Heart left ventricle (tissue), 16 donors: ENCODE measurements at regions of chr13 and their contacts with region 1.

Region 1: DNA sequence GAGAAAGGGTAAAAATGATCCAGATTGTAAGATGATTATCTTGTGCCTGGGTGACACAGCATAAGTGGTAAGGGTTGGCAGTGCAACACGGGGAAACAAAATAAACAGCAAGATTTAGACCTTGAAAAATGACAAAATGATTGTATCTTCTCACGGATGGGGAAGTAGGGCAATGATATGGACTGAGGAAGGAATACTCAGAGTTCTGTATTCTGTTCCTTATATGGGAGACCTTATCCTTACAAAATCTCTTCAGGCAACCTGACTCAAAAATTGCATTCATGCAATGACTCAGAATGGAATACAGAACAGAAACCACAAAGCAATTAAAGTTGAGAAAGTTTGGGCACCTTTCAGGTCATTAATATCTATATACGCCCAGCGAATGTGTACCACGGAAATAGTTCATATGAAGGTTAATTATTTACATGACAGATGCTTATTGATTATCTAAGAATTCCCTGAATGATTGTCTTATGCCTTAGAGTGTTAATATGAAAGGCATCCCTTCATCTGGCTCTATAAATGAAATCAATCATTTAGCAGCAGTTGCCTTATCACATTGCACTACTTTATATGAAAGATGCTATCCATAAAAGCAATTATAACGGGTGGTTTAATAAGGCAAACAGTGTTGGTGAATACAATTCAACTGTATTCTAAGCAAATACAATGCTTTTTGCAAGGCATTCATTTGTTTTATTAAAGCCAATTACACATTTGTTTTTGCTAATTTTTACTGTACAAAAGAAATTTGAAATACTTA is 149.1 kb downstream of the HS6ST3 start:
- DNase-seq: no peak
- ATAC-seq: no peak
- H3K4me3 ChIP-seq: no peak overlapping the region
- H3K27ac ChIP-seq: no peak overlapping the region
- H3K4me1 ChIP-seq: no peaks in the 10 kb centered on the region
- H3K27me3 ChIP-seq: no peaks in the 10 kb centered on the region
- CTCF ChIP-seq: no peak
- POLR2A ChIP-seq: no peak

Region 2: DNA sequence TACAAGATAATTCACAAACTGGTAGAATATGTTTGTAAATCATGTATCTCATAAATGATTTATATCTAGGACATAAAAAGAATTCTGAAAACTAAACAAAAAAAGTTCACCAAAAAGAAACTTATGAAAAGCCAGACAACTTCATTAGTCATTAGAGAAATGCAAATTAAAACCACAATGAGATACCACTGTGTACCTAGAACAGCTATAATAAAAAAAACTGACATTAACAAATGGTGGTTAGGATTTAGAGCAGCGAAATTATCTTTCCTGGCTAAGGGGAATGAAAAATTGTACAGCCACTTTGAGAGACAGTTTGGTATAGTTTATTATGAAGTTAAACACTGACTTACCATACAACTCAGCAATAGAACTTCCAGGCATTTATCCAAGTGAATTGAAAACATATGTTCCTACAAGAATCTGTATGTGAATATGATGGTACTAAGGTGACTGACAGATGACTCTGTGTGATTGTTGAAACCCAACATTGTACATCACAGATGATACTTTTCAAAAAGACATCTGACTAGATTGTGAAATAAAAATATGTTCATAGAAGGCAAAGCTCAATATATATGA is 227.7 kb before region 1 on chr13:
- intact Hi-C with region 1: loop called in 1 of 10 experiments (anchors 10 kb)
- DNase-seq: no peak
- ATAC-seq: no peak
- H3K4me3 ChIP-seq: no peak overlapping the region
- H3K27ac ChIP-seq: no peak overlapping the region
- H3K4me1 ChIP-seq: no peaks in the 10 kb centered on the region
- H3K27me3 ChIP-seq: no peaks in the 10 kb centered on the region
- CTCF ChIP-seq: no peak
- POLR2A ChIP-seq: no peak